Left lung (tissue), 14 donors: ENCODE measurements at regions of chr1 and their contacts with region 1.

Region 1: GRCh38 chr1:206583707-206584648 is 28.3 kb downstream of the EIF2D start:
- DNase-seq: peak; percentile 56 to 87 (median 73)
- ATAC-seq: peak; percentile 71
- H3K4me3 ChIP-seq: no peak overlapping the region
- H3K27ac ChIP-seq: peak overlapping the region in 1 of 2 donors; percentile 91
- H3K4me1 ChIP-seq: peaks cover 0 to 74% of the 10 kb centered on the region in 2 donors
- H3K27me3 ChIP-seq: no peaks in the 10 kb centered on the region
- CTCF ChIP-seq: peak; percentile 86 to 96

Region 2: GRCh38 chr1:206419250-206419649 is 164.7 kb before region 1 on chr1:
- intact Hi-C with region 1: no loop called
- DNase-seq: no peak
- ATAC-seq: no peak
- H3K4me3 ChIP-seq: no peak overlapping the region
- H3K27ac ChIP-seq: no peak overlapping the region
- H3K4me1 ChIP-seq: peaks cover 0 to 6% of the 10 kb centered on the region in 2 donors
- H3K27me3 ChIP-seq: no peaks in the 10 kb centered on the region
- CTCF ChIP-seq: no peak

Region 3: GRCh38 chr1:206544562-206545257 is 39.3 kb before region 1 on chr1:
- intact Hi-C with region 1: loop called in 1 of 2 experiments (anchors 5 kb)
- DNase-seq: peak in 3 of 4 donors; percentile 68 to 89 (median 72)
- ATAC-seq: peak; percentile 74
- H3K4me3 ChIP-seq: no peak overlapping the region
- H3K27ac ChIP-seq: no peak overlapping the region
- H3K4me1 ChIP-seq: peaks cover 6 to 16% of the 10 kb centered on the region in 2 donors
- H3K27me3 ChIP-seq: no peaks in the 10 kb centered on the region
- CTCF ChIP-seq: peak; percentile 76 to 90

Region 4: GRCh38 chr1:206646504-206646903 is 62.5 kb after region 1 on chr1:
- intact Hi-C with region 1: no loop called
- DNase-seq: no peak
- ATAC-seq: no peak
- H3K4me3 ChIP-seq: no peak overlapping the region
- H3K27ac ChIP-seq: no peak overlapping the region
- H3K4me1 ChIP-seq: no peaks in the 10 kb centered on the region
- H3K27me3 ChIP-seq: no peaks in the 10 kb centered on the region
- CTCF ChIP-seq: no peak

Region 5: DNA sequence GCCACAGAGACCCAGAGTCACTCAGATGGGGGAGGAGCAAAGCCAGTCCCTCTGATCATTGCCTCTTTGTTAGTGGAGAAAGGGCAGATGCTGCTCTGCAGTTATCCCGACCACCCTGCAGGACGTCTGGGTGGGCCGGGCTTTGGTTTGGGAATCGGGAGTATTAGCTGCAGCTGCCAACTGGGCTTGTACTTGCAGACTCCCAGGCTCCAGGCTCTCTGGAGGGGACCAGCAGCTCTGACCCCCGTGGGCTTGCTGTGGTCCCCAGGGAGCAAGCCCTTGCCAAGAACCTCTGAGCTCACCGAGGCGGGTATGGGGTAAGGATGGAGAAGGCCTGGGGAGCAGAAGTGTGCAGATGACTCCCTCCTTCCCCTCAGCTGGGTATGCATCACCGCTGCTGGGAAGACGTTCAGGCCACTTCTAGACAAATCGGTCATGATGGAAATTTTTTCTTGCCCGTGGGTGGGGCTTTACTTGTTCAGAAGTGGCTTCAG is 122.4 kb after region 1 on chr1:
- intact Hi-C with region 1: no loop called
- DNase-seq: peak in 2 of 4 donors; percentile 59 to 76
- ATAC-seq: peak; percentile 53
- H3K4me3 ChIP-seq: no peak overlapping the region
- H3K27ac ChIP-seq: peak overlapping the region; percentile 55 to 65
- H3K4me1 ChIP-seq: peaks cover 54 to 100% of the 10 kb centered on the region in 2 donors
- H3K27me3 ChIP-seq: no peaks in the 10 kb centered on the region
- CTCF ChIP-seq: no peak

Region 6: DNA sequence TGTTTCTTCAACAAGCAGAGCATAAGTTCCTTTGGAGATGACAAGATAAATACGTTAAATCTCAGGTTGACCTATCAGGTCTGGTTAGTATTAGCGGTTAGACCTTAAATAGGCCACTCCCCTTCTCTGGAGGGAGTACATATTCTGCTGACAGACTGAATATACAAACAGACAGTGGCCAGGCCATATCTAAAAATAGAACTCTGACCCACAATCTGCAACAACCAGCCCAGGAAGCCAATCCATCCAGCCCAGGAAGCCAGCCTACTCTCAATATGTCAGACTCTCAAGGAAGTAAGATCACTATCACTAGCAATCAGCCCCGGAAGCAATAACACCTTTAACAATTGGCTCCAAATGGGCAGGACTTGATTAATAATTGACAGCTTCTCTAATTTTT is 288.2 kb after region 1 on chr1:
- intact Hi-C with region 1: no loop called
- DNase-seq: no peak
- ATAC-seq: no peak
- H3K4me3 ChIP-seq: no peak overlapping the region
- H3K27ac ChIP-seq: no peak overlapping the region
- H3K4me1 ChIP-seq: no peaks in the 10 kb centered on the region
- H3K27me3 ChIP-seq: no peaks in the 10 kb centered on the region
- CTCF ChIP-seq: no peak